Activated naive CD4-positive, alpha-beta T cell treated with anti-CD3 and anti-CD28 coated beads for 36 hours (primary cell): ENCODE measurements at regions of chrX and their contacts with region 1.

Region 1: DNA sequence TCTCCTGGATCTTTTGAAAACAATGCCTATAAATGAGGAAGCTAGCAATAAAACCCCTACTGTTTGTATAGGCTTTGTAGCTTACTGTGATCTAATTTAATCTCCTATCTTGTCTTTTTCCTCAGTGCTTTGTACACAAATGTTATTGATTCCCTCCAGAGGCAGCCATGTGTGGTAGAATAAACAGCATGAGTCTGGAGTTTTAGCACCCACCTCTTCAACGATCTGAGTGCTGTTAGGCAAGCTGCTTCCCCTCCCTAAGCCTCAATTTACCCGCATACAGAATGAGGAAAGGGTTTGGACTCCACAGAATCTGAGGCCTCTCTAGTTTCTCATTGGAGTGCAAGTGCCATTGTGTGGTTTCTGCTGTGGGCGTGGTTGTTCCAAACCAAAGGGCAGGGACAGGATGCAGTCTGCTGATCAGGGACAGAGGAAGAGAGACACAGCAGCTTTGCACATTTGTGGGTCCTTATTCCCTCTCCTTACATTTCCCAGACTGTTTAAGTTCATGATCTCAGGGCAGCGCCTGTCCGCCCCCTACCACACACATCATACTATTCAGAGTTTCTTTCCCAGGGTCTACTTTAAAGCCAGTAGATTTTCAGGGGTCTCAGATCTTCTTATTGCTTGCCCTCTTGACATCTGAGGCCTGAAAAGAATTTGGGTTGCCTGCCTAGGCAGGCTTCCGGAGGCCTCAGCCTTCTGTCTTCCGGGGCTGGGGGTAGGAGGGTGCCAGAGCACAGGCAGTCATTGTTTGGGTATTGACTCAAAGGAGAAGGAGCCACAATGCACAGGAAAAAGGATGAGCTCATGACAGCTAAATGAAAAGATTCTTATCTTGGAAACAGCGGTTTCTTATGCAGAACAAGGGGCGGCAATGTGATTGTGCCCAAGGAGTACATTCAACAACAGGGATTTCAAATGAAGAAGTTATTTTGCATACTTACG is 114.9 kb upstream of the TEX13D start:
- DNase-seq: peak; percentile 68
- H3K4me3 Mint-ChIP-seq: peak overlapping the region; percentile 60
- H3K27ac Mint-ChIP-seq: peak overlapping the region; percentile 93
- H3K4me1 Mint-ChIP-seq: peaks cover 76% of the 10 kb centered on the region
- H3K27me3 Mint-ChIP-seq: no peaks in the 10 kb centered on the region

Region 2: DNA sequence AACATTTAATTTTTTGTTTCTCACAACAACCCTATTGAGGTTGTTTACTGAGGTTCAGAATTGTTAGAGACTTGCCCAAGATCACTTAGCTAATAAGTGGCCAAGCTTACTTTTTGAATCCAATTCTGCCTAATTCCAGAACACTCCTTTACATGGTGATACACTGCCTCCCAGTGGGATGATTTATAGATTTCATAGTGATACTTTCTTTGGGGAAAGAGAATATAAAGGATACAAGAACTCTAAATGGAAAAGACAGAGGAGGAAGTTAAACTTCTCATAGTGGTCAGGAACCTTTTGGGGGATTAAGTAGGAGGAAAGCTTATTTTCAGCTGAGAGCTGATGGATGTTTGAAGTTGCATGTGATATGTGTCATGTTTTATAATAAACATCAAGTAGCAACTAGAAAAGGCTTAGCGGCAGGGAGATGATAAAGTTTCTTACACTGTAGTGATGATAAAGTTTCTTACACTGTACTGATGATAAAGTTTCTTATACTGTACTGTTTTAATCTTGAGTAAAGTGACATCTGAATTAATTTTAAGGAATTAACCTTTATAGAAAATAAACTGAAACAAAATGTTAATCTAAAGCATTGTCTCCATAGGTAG is 240.8 kb before region 1 on chrX:
- CTCF ChIA-PET with region 1: no interaction called
- intact Hi-C with region 1: no loop called
- DNase-seq: no peak
- H3K4me3 Mint-ChIP-seq: no peak overlapping the region
- H3K27ac Mint-ChIP-seq: no peak overlapping the region
- H3K4me1 Mint-ChIP-seq: peaks cover 51% of the 10 kb centered on the region
- H3K27me3 Mint-ChIP-seq: no peaks in the 10 kb centered on the region

Region 3: GRCh38 chrX:124086411-124086810 is 131.2 kb before region 1 on chrX:
- CTCF ChIA-PET with region 1: no interaction called
- intact Hi-C with region 1: loop called (anchors 1 kb)
- DNase-seq: peak; percentile 58
- H3K4me3 Mint-ChIP-seq: no peak overlapping the region
- H3K27ac Mint-ChIP-seq: peak overlapping the region; percentile 83
- H3K4me1 Mint-ChIP-seq: peaks cover 28% of the 10 kb centered on the region
- H3K27me3 Mint-ChIP-seq: no peaks in the 10 kb centered on the region

Region 4: DNA sequence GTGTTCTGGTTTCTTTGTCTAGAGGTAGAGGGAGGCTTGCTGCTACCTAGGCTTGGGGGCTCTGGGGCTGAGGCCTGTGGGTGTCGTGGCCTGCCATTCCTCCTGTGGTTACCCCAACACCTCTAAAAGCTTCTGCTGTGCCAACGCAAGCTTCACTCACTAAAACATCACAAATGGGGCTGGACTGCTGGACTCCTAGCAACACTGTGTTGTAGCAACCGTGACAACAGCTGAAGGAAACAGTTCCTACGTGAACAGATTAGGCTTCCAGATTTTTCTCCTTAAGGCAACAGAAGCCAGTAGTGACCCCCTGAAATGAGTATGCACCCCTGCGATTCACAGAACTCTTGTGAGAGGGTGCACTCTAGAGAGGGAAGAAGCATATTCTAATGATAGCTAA is 23.4 kb before region 1 on chrX:
- CTCF ChIA-PET with region 1: no interaction called
- intact Hi-C with region 1: no loop called
- DNase-seq: no peak
- H3K4me3 Mint-ChIP-seq: no peak overlapping the region
- H3K27ac Mint-ChIP-seq: no peak overlapping the region
- H3K4me1 Mint-ChIP-seq: no peaks in the 10 kb centered on the region
- H3K27me3 Mint-ChIP-seq: no peaks in the 10 kb centered on the region

Region 5: GRCh38 chrX:124232523-124233201 is 15.1 kb after region 1 on chrX:
- CTCF ChIA-PET with region 1: interaction called, 4 read pairs
- intact Hi-C with region 1: loop called (anchors 1 kb)
- DNase-seq: peak; percentile 80
- H3K4me3 Mint-ChIP-seq: no peak overlapping the region
- H3K27ac Mint-ChIP-seq: no peak overlapping the region
- H3K4me1 Mint-ChIP-seq: peaks cover 19% of the 10 kb centered on the region
- H3K27me3 Mint-ChIP-seq: no peaks in the 10 kb centered on the region

Region 6: DNA sequence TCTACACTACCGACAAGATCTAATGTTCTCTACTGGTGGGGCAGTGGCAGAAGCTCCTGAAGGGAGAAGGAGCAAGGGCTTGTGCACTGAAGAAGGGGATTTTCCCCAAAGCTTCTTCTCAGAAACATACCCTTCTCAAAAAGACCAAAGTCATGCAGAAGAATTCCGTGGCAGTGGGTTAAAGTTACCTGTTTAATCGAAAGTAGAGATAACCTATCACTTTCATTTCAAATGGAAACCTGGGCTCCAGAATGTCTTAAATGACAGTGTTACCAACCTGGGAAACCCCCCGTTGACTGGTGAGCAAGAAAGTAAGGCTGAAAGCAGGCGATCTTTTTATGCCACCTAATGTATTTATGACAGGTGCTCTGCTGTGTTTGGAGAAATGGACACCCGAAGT is 22.3 kb after region 1 on chrX:
- CTCF ChIA-PET with region 1: interaction called, 4 read pairs
- intact Hi-C with region 1: loop called (anchors 1 kb)
- DNase-seq: peak; percentile 72
- H3K4me3 Mint-ChIP-seq: peak overlapping the region; percentile 15
- H3K27ac Mint-ChIP-seq: peak overlapping the region; percentile 42
- H3K4me1 Mint-ChIP-seq: peaks cover 40% of the 10 kb centered on the region
- H3K27me3 Mint-ChIP-seq: no peaks in the 10 kb centered on the region

Region 7: DNA sequence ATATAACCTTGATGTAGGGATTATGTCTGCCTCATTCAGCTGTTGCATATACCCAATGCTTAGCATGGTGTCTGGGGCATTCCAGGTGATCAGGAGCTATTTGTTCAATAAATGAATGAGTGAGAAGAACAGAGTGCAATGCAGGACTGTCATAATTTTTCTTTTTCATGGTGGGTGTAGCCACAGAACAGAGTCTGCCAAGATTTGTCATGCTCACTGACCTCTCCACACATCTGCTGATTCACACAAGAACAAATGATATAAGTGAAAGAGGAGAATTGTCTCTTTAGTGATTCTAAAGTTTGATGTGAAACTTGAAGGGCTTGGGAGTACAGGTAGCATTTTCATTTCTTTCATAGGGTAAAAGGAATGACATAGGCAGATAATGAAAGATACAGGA is 50.5 kb after region 1 on chrX:
- CTCF ChIA-PET with region 1: no interaction called
- intact Hi-C with region 1: no loop called
- DNase-seq: no peak
- H3K4me3 Mint-ChIP-seq: no peak overlapping the region
- H3K27ac Mint-ChIP-seq: no peak overlapping the region
- H3K4me1 Mint-ChIP-seq: peaks cover 5% of the 10 kb centered on the region
- H3K27me3 Mint-ChIP-seq: no peaks in the 10 kb centered on the region

Region 8: GRCh38 chrX:124280294-124280902 is 62.8 kb after region 1 on chrX:
- CTCF ChIA-PET with region 1: no interaction called
- intact Hi-C with region 1: loop called (anchors 5 kb)
- DNase-seq: no peak
- H3K4me3 Mint-ChIP-seq: no peak overlapping the region
- H3K27ac Mint-ChIP-seq: peak overlapping the region; percentile 46
- H3K4me1 Mint-ChIP-seq: peaks cover 17% of the 10 kb centered on the region
- H3K27me3 Mint-ChIP-seq: no peaks in the 10 kb centered on the region

Region 9: GRCh38 chrX:124328765-124329164 is 111.2 kb after region 1 on chrX:
- CTCF ChIA-PET with region 1: no interaction called
- intact Hi-C with region 1: no loop called
- DNase-seq: no peak
- H3K4me3 Mint-ChIP-seq: no peak overlapping the region
- H3K27ac Mint-ChIP-seq: no peak overlapping the region
- H3K4me1 Mint-ChIP-seq: peaks cover 28% of the 10 kb centered on the region
- H3K27me3 Mint-ChIP-seq: no peaks in the 10 kb centered on the region

Region 10: DNA sequence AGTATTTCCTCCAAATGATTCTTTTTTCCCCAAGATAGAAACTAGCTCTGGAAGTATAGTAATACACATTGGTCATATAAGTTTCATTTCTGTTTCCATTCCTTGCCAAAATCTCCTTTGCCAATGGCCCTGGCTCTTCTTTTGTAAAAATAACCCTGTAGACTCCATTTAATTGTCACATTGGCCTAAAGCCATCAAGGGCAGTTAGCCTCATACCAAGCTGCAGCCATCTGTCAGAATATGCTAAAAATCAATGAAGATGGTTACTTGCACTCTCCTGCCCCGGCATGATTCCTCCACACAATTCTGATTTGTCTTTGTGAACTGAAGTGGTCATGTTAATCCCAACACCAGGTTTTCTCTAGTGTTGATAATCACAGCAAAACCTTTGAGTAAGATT is 509.3 kb after region 1 on chrX:
- CTCF ChIA-PET with region 1: no interaction called
- intact Hi-C with region 1: loop called (anchors 5 kb)
- DNase-seq: no peak
- H3K4me3 Mint-ChIP-seq: no peak overlapping the region
- H3K27ac Mint-ChIP-seq: no peak overlapping the region
- H3K4me1 Mint-ChIP-seq: peaks cover 29% of the 10 kb centered on the region
- H3K27me3 Mint-ChIP-seq: no peaks in the 10 kb centered on the region